ENCODE measurements at regions of chr1 and their contacts with region 1.

Region 1: GRCh38 chr1:67535474-67535873 is 105.3 kb upstream of the SERBP1 start:
- DNase-seq: peak; percentile 80
- ATAC-seq: peak; percentile 80
- H3K4me3 Mint-ChIP-seq: no peak overlapping the region
- H3K27ac Mint-ChIP-seq: no peak overlapping the region
- H3K4me1 Mint-ChIP-seq: no peaks in the 10 kb centered on the region; the same call in 1 of the 2 replicates
- H3K27me3 Mint-ChIP-seq: peaks cover 6% of the 10 kb centered on the region; the same call in 1 of the 2 replicates
- CTCF ChIP-seq: peak; percentile 87

Region 2: DNA sequence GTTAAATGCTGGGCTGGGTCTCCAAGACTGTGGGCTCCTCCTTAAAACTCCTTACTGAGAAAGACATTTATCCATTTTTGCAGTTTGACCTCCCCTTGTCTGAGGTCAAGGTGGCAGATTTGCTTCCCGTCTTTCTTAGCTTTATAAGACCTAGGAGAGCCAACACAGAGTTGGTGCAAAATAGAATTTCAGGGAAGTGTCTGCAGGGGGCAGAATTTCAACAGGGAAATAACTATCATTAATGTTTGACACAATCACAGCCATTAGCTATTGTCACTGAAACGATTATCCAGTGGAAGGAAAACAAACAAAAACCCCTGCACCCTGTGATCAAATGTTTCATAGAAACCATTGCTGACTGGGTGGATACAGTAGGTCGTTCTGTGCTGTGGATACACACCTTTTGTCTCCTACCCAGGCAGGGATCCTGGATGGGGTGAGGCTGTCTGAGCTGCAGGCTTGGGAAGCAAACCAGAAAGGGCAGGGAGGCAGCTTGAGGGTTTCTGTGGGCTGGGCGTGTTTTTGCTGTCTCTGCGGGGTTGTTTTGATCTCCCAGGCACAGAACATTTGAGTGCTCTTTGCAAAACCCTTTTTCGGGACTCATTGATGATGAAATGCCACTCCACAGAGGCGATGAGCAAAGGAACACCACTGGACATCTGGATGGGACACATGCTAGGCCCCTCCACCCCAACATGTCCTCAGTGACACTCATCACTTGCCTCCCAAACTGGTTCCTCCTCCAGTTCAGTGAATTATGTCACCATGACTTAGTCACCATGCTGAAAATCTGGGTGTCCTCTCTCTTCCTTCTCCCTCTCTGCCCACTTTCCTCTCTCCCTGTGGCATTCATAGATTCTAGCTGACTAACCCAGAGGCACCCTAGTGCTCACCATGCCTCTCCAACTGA is 11.1 kb before region 1 on chr1:
- CTCF ChIA-PET with region 1: interaction called, 41 read pairs
- POLR2A ChIA-PET with region 1: no interaction called
- DNase-seq: no peak
- ATAC-seq: peak; percentile 71
- H3K4me3 Mint-ChIP-seq: no peak overlapping the region
- H3K27ac Mint-ChIP-seq: no peak overlapping the region
- H3K4me1 Mint-ChIP-seq: no peaks in the 10 kb centered on the region
- H3K27me3 Mint-ChIP-seq: peaks cover 98% of the 10 kb centered on the region
- CTCF ChIP-seq: no peak

Region 3: DNA sequence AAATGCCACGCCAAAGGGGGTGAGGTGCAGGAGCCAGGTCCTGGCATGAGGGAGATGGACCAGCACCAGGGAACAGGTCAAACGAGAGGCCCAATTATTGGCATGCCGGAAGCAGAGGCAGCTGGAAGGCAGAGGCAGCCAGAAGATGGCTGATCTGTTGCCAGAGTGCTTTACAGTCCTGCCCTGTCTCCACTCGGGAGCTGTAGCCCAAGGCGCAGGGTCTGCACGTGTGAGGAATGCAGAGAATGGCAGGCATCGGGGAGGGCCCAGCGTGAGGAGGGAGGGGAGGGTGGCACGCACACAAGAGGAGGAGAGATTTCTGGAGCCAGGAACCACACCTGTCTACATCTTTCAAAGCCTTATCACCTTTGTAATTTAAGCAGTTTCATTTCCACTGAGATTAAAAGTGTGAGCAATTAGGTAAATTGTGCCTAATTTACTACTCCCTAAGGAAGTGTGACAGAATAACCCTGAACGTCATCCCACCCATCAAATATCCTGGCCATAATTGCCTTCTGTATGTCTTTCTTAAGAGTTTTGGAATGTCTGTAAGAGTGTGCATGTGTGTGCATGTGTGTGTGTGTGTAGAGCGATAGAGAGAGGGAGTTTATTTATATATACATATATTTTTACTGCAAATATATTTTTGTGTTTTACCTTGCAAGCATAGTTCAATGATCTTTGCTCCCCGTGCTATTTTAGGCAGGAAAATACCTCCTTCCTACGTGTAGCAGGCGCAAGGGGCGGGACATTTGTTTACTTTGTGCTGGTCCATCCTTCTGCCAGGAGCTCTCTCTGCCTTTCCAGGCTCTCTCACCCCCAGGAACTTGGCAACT is 20.2 kb after region 1 on chr1:
- CTCF ChIA-PET with region 1: interaction called, 13 read pairs
- POLR2A ChIA-PET with region 1: interaction called, 4 read pairs
- DNase-seq: peak; percentile 48
- ATAC-seq: peak; percentile 83
- H3K4me3 Mint-ChIP-seq: no peak overlapping the region
- H3K27ac Mint-ChIP-seq: no peak overlapping the region
- H3K4me1 Mint-ChIP-seq: peaks cover 3% of the 10 kb centered on the region; the same call in 1 of the 2 replicates
- H3K27me3 Mint-ChIP-seq: no peaks in the 10 kb centered on the region; the same call in 1 of the 2 replicates
- CTCF ChIP-seq: no peak

Region 4: DNA sequence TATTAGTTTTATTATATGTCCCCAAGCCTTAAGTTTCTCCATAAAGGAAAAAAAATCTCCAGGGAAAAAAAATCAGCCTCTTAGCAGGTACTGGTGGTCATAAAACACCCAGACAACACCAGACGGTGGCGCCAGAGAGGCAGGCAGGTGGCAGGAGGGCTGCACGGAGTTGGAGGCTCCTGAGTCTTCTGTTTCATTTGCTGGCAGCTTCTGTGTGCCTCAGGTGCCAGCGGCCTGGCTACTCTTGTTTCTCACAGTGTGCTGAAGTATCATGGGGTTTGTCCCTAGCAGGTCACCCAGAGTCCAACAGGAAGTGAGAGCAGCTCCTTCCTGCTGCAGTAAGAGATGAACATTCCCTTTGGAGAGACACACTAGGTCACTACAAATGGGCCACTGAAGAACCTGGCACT is 26.2 kb after region 1 on chr1:
- CTCF ChIA-PET with region 1: interaction called, 13 read pairs
- POLR2A ChIA-PET with region 1: interaction called, 4 read pairs
- DNase-seq: peak; percentile 97
- ATAC-seq: peak; percentile 92
- H3K4me3 Mint-ChIP-seq: no peak overlapping the region
- H3K27ac Mint-ChIP-seq: no peak overlapping the region
- H3K4me1 Mint-ChIP-seq: peaks cover 8% of the 10 kb centered on the region
- H3K27me3 Mint-ChIP-seq: peaks cover 3% of the 10 kb centered on the region; the same call in 1 of the 2 replicates
- CTCF ChIP-seq: peak; percentile 76

Region 5: GRCh38 chr1:67668660-67669059 is 133.2 kb after region 1 on chr1:
- CTCF ChIA-PET with region 1: no interaction called
- POLR2A ChIA-PET with region 1: no interaction called
- DNase-seq: no peak
- ATAC-seq: no peak
- H3K4me3 Mint-ChIP-seq: no peak overlapping the region
- H3K27ac Mint-ChIP-seq: no peak overlapping the region
- H3K4me1 Mint-ChIP-seq: no peaks in the 10 kb centered on the region
- H3K27me3 Mint-ChIP-seq: peaks cover 6% of the 10 kb centered on the region; the same call in 1 of the 2 replicates
- CTCF ChIP-seq: no peak